H1 (cell line): ENCODE measurements at regions of chr11 and their contacts with region 1.

Region 1: DNA sequence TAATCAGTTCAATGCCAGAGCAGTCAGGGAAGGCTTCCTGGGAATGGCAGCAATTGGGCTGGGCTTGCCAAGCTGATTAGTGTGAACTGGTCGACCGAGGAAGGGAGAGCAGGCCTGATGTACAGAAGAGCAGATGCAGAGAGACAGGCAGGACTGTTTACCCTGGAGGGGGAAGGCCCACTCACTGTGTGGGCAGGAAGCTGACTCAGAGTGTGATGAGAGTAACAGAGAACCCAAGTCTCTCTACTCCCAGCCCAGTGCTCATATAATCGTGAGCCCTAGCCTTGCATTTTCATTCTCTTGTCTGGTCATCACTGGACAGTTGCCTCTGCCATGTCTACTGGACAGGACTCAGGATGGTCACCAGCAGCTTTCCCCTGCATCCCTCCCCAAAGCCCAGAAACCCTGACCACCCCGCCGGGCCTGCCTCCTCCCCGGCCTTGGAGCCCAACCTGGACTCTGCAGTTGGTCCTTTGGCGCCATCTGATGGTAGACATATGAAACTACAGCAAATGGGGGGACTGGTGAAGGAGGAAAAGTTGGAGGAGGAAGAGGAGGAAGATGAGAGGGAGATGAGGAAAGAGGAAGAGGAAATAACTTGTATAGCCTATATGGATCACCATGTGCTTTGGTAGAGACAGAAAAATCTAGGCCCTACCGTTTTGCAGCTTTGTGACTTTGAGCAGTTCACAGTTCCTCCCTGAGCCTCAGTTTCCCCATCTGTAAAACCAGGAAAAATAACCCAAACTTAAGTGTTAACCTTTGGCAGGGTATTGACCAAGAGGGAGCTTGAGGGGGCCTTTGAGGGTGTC is 43.4 kb upstream of the PRDM11 start:
- DNase-seq: peak in 1 of 2 experiments; percentile 77
- H3K4me3 ChIP-seq: no peak overlapping the region
- H3K27ac ChIP-seq: no peak overlapping the region
- H3K4me1 ChIP-seq: no peaks in the 10 kb centered on the region; a peak in 2 of 7 replicates
- H3K27me3 ChIP-seq: no peaks in the 10 kb centered on the region
- CTCF ChIP-seq: peak; percentile 67 to 97 (median 89)
- EP300 ChIP-seq: no peak
- POLR2A ChIP-seq: no peak
- RAD21 ChIP-seq: peak; percentile 99

Region 2: GRCh38 chr11:44911029-44911814 is 191.8 kb before region 1 on chr11:
- CTCF ChIA-PET with region 1: interaction called, 11 read pairs
- POLR2A ChIA-PET with region 1: no interaction called
- DNase-seq: peak; percentile 82 to 95
- H3K4me3 ChIP-seq: peak overlapping the region in 2 of 4 experiments; percentile 10 to 47; a peak in 3 of 8 replicates
- H3K27ac ChIP-seq: no peak overlapping the region
- H3K4me1 ChIP-seq: peaks cover 0 to 29% (median 6%) of the 10 kb centered on the region in 4 experiments; a peak in 6 of 7 replicates
- H3K27me3 ChIP-seq: no peaks in the 10 kb centered on the region; a peak in 2 of 7 replicates
- CTCF ChIP-seq: peak; percentile 52 to 79 (median 67)
- EP300 ChIP-seq: 0 out of 3 replicates have a peak, but pooled peaks of 1 of the 2 experiments have one; percentile 7
- POLR2A ChIP-seq: no peak
- RAD21 ChIP-seq: peak; percentile 74 to 82

Region 3: DNA sequence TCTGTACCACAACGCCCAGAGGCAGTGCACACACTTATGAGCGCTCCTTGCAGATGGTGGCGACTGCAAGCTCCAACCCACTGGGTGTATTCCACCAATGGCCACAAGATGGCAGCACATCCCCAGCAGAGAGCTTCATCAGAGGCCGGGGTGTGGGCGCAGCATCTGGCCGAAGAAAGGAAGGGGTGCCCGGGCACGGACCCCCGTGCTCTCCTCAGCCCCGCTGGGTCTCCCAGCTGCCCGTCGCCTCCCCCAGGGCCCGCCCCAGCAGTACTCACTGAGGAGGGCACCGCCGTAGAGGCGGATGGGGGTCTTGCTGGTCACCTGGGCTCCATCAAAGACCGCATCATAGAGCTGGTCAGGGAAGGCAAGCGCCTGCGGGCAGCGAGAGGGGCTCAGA is 166.5 kb before region 1 on chr11:
- CTCF ChIA-PET with region 1: interaction called, 1,347 read pairs
- POLR2A ChIA-PET with region 1: interaction called, 18 read pairs
- DNase-seq: peak; percentile 64 to 98
- H3K4me3 ChIP-seq: 0 out of 8 replicates have a peak overlapping the region, but pooled peaks of 1 of the 4 experiments have one; percentile 18
- H3K27ac ChIP-seq: no peak overlapping the region
- H3K4me1 ChIP-seq: peaks cover 0 to 11% (median 7%) of the 10 kb centered on the region in 4 experiments; a peak in 6 of 7 replicates
- H3K27me3 ChIP-seq: no peaks in the 10 kb centered on the region
- CTCF ChIP-seq: peak in 2 of 3 experiments; percentile 91 to 98; a peak in 3 of 4 replicates
- EP300 ChIP-seq: no peak
- POLR2A ChIP-seq: no peak
- RAD21 ChIP-seq: peak; percentile 98 to 99

Region 4: GRCh38 chr11:44977476-44977984 is 125.5 kb before region 1 on chr11:
- CTCF ChIA-PET with region 1: interaction called, 42 read pairs
- POLR2A ChIA-PET with region 1: no interaction called
- DNase-seq: no peak
- H3K4me3 ChIP-seq: no peak overlapping the region
- H3K27ac ChIP-seq: no peak overlapping the region
- H3K4me1 ChIP-seq: peaks cover 0 to 27% (median 18%) of the 10 kb centered on the region in 4 experiments; a peak in 6 of 7 replicates
- H3K27me3 ChIP-seq: no peaks in the 10 kb centered on the region
- CTCF ChIP-seq: peak; percentile 57 to 83 (median 79)
- EP300 ChIP-seq: no peak
- POLR2A ChIP-seq: no peak
- RAD21 ChIP-seq: peak; percentile 48 to 69

Region 5: DNA sequence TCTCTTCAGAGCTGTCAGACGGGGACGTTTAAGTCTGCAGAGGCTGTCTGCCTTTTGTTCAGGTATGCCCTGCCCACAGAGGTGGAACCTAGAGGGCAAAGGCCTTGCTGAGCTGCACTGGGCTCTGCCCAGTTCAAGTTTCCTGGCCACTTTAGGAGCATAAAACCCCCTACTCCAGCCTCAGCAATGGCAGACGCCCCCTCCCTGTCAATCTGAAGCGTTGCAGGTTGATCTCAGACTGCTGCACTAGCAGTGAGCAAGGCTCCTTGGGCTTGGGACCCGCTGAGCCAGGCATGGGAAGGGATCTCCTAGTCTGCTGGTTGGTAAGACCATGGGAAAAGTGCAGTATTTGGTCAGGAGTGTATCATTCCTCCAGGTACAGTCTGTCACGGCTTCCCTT is 85.7 kb before region 1 on chr11:
- CTCF ChIA-PET with region 1: interaction called, 55 read pairs
- POLR2A ChIA-PET with region 1: no interaction called
- DNase-seq: peak; percentile 10 to 65
- H3K4me3 ChIP-seq: no peak overlapping the region
- H3K27ac ChIP-seq: no peak overlapping the region
- H3K4me1 ChIP-seq: peaks cover 5 to 15% (median 12%) of the 10 kb centered on the region in 4 experiments; a peak in 6 of 7 replicates
- H3K27me3 ChIP-seq: no peaks in the 10 kb centered on the region
- CTCF ChIP-seq: peak; percentile 74 to 87 (median 85)
- EP300 ChIP-seq: no peak
- POLR2A ChIP-seq: no peak
- RAD21 ChIP-seq: peak; percentile 56 to 74

Region 6: DNA sequence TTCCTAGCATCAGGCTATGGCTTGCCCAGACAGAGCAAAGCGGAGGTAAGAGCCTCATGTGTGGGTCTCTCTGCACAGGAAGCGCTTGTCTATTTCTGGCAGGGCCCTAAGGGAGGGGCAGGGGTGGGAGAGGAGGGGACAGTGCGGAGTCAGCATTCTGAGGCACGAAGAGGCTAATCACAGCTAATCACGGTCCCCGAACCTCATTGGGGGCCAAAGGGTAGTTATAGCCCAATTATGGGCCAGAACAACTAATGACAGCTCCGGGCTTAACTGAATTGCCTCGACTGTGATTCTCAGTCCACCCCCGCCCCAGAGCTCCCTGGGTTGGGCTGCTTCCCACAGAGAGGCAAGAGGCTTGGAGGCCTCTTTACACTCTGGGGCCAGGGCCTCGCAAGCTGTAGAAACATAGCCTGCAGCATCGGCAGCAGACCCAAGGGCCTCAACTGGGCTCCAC is 29.3 kb before region 1 on chr11:
- CTCF ChIA-PET with region 1: interaction called, 25 read pairs
- POLR2A ChIA-PET with region 1: no interaction called
- DNase-seq: no peak
- H3K4me3 ChIP-seq: no peak overlapping the region
- H3K27ac ChIP-seq: no peak overlapping the region
- H3K4me1 ChIP-seq: peaks cover 0 to 7% (median 0%) of the 10 kb centered on the region in 4 experiments; a peak in 3 of 7 replicates
- H3K27me3 ChIP-seq: peaks cover 0 to 2% (median 0%) of the 10 kb centered on the region in 4 experiments; a peak in 1 of 7 replicates
- CTCF ChIP-seq: no peak
- EP300 ChIP-seq: no peak
- POLR2A ChIP-seq: no peak
- RAD21 ChIP-seq: no peak

Region 7: GRCh38 chr11:45145379-45146071 is 42.5 kb after region 1 on chr11:
- CTCF ChIA-PET with region 1: no interaction called
- POLR2A ChIA-PET with region 1: no interaction called
- DNase-seq: peak; percentile 56 to 90
- H3K4me3 ChIP-seq: peak overlapping the region; percentile 53 to 85 (median 62); a peak in 7 of 8 replicates
- H3K27ac ChIP-seq: no peak overlapping the region
- H3K4me1 ChIP-seq: peaks cover 0 to 11% (median 4%) of the 10 kb centered on the region in 4 experiments; a peak in 4 of 7 replicates
- H3K27me3 ChIP-seq: peaks cover 0 to 23% (median 10%) of the 10 kb centered on the region in 4 experiments; a peak in 5 of 7 replicates
- CTCF ChIP-seq: no peak
- EP300 ChIP-seq: no peak
- POLR2A ChIP-seq: no peak; a peak in 2 of 3 replicates
- RAD21 ChIP-seq: no peak

Region 8: DNA sequence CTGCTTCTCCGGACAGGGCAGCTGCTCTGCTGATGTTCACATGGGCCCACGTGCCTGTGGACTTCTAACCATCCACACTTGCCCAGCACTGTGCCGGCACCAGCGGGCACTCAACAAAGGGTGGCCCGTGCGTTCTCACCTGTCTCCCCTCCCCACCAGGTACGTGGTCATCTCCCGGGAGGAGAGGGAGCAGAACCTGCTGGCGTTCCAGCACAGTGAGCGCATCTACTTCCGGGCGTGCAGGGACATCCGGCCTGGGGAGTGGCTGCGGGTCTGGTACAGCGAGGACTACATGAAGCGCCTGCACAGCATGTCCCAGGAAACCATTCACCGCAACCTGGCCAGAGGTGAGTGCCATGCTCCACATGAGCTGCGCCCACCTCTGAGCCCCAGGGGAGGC is 116.4 kb after region 1 on chr11:
- CTCF ChIA-PET with region 1: no interaction called
- POLR2A ChIA-PET with region 1: no interaction called
- DNase-seq: no peak
- H3K4me3 ChIP-seq: no peak overlapping the region
- H3K27ac ChIP-seq: no peak overlapping the region
- H3K4me1 ChIP-seq: no peaks in the 10 kb centered on the region; a peak in 1 of 7 replicates
- H3K27me3 ChIP-seq: no peaks in the 10 kb centered on the region; a peak in 1 of 7 replicates
- CTCF ChIP-seq: no peak
- EP300 ChIP-seq: no peak
- POLR2A ChIP-seq: no peak
- RAD21 ChIP-seq: no peak

Region 9: DNA sequence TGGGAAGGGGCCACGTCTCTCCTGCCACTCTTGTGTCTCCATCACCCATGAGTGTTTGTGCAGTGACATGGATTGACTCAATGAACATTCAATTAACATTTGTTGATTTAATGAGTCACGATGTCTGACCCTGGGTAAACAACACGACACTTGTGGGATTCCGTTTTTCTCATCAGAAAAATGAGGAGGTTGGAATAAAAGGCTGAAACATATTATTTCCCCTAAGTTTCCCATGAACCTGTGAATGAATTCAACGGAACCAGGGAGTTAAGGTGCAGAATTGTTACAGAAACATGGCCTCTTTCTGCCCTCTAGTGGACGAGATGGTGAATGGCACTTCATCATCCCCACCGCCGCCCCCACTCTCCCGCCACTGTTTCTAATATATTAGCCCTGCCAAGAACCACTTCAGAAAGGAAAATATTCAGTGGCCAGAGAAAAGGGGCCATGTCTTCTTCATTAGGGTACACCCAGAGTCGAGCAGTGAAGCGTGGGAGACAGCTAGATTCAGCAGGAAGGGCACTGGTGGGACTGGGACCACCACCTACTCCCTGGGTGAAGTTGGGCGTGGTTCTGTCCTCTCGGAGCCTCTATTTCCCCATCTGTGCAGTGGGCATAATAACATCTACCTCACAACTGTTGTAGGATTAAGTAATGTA is 229.4 kb after region 1 on chr11:
- CTCF ChIA-PET with region 1: interaction called, 95 read pairs
- POLR2A ChIA-PET with region 1: no interaction called
- DNase-seq: peak in 1 of 2 experiments; percentile 68
- H3K4me3 ChIP-seq: no peak overlapping the region
- H3K27ac ChIP-seq: no peak overlapping the region
- H3K4me1 ChIP-seq: no peaks in the 10 kb centered on the region
- H3K27me3 ChIP-seq: no peaks in the 10 kb centered on the region; a peak in 1 of 7 replicates
- CTCF ChIP-seq: peak; percentile 44 to 65 (median 49)
- EP300 ChIP-seq: no peak
- POLR2A ChIP-seq: no peak
- RAD21 ChIP-seq: peak; percentile 80 to 82